Pancreas (tissue), 10 donors: ENCODE measurements at regions of chr1 and their contacts with region 1.

Region 1: DNA sequence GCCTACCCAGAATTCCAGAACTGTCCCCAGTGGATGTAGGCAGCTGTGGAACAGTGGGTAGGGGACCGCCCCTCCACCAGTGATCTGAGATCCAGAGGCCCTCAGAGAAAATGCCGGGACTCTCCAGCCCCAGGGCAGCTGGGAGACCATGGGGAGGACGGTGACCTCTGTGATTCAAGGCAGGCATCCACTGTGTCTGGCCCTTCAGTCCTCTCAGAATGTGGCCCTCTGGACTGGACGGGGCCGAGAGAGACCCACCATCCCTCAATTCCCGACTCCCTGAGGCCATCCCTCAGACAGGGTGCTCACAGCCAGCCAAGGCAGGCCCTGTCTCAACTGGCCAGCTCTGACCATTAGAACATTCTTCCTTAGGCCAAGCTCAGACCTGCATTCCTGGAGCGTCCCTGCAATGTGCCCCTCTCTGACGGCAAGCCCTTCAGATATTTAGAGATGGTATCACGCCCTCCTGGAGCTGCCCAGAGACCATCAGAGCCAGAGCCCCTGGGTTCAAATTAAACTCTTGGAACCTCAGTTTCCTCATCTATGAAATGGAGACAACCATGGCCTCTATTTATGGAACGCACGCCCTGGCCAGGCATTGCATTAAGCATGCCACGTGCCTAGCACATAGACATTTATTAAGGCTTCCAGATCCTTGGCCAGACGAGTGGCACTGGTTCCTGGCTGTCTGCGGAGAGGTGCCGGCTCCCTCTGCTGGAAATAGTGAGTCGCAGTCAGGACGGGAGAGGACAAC is 9.6 kb upstream of the EPS8L3 start:
- DNase-seq: peak; percentile 76 to 91 (median 82)
- ATAC-seq: peak; percentile 88 to 93 (median 92)
- H3K4me3 ChIP-seq: no peak overlapping the region
- H3K27ac ChIP-seq: no peak overlapping the region
- H3K4me1 ChIP-seq: no peaks in the 10 kb centered on the region
- H3K27me3 ChIP-seq: no peaks in the 10 kb centered on the region
- CTCF ChIP-seq: peak; percentile 68 to 78 (median 73)

Region 2: GRCh38 chr1:109539676-109540075 is 233.6 kb before region 1 on chr1 and contains the start of gene GPR61:
- intact Hi-C with region 1: loop called in 2 of 3 experiments (anchors 5 to 10 kb)
- DNase-seq: no peak
- ATAC-seq: no peak
- H3K4me3 ChIP-seq: no peak within 1 kb of the TSS
- H3K27ac ChIP-seq: no peak within 1 kb of the TSS
- H3K4me1 ChIP-seq: no peaks in the 10 kb centered on the region
- H3K27me3 ChIP-seq: no peaks in the 10 kb centered on the region
- CTCF ChIP-seq: no peak
- total RNA-seq, gene GPR61: 0.09 TPM in 1 of 6 donors, not detected in the others

Region 3: GRCh38 chr1:109548321-109549267 is 224.7 kb before region 1 on chr1 and contains the start of gene GNAI3:
- intact Hi-C with region 1: loop called in 2 of 3 experiments (anchors 5 to 10 kb)
- DNase-seq: peak; percentile 91 to 96 (median 94)
- ATAC-seq: peak; percentile 94 to 97 (median 95)
- H3K4me3 ChIP-seq: peak within 1 kb of the TSS; percentile 43 to 93 (median 80)
- H3K27ac ChIP-seq: peak within 1 kb of the TSS; percentile 66 to 99 (median 88)
- H3K4me1 ChIP-seq: peaks cover 0 to 41% (median 8%) of the 10 kb centered on the region in 3 donors
- H3K27me3 ChIP-seq: no peaks in the 10 kb centered on the region
- CTCF ChIP-seq: no peak
- total RNA-seq, gene GNAI3: 2.5 to 3.9 (median 3.1) TPM

Region 4: DNA sequence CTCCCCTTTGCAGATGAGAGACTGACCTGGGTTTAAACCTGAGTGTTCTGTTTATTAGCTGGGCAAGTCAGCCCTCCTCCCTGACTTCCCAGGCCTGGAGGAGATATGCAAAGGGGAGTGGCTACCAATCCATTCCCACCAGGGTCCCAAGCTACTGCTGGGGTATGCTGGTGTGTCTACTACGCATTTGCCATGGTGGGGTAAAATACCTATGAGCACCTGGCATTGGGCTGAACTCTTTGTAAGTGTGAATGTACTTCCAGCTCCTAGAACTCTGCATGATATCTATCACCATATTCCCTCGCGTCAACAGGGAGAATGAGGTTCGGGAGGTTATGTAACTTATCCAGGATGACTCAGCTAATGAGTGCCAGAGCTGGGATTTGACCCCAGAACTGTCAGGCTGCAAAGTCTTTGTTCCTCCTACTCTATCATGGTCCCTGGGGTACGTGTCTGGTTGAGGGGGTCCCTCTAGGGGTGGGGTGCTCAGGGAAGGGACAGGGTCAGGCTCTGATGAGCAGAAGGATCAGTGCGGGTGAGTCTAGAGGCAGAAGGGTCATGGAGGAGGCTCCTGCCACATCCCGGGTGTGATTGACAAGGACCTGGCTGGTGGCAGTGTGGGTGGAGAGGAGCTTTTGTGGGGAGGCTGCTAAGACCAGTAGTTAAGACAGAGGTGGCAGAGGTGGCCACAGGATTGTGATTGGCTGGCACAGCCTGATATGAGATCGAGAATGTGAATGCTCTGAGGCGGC is 136.9 kb before region 1 on chr1:
- intact Hi-C with region 1: loop called in 2 of 3 experiments (anchors 5 kb)
- DNase-seq: peak in 1 of 6 donors; percentile 6
- ATAC-seq: peak in 2 of 4 donors; percentile 16 to 27
- H3K4me3 ChIP-seq: no peak overlapping the region
- H3K27ac ChIP-seq: no peak overlapping the region
- H3K4me1 ChIP-seq: no peaks in the 10 kb centered on the region
- H3K27me3 ChIP-seq: no peaks in the 10 kb centered on the region
- CTCF ChIP-seq: no peak

Region 5: GRCh38 chr1:109643385-109644230 is 129.7 kb before region 1 on chr1:
- intact Hi-C with region 1: loop called in 2 of 3 experiments (anchors 5 kb)
- DNase-seq: peak; percentile 75 to 98 (median 86)
- ATAC-seq: peak; percentile 92 to 95 (median 94)
- H3K4me3 ChIP-seq: no peak overlapping the region
- H3K27ac ChIP-seq: no peak overlapping the region
- H3K4me1 ChIP-seq: peaks cover 0 to 6% (median 0%) of the 10 kb centered on the region in 3 donors
- H3K27me3 ChIP-seq: no peaks in the 10 kb centered on the region
- CTCF ChIP-seq: peak; percentile 70 to 91 (median 84)

Region 6: GRCh38 chr1:109864047-109864822 is 90.9 kb after region 1 on chr1:
- intact Hi-C with region 1: no loop called
- DNase-seq: no peak
- ATAC-seq: peak in 2 of 4 donors; percentile 39 to 52
- H3K4me3 ChIP-seq: no peak overlapping the region
- H3K27ac ChIP-seq: no peak overlapping the region
- H3K4me1 ChIP-seq: no peaks in the 10 kb centered on the region
- H3K27me3 ChIP-seq: no peaks in the 10 kb centered on the region
- CTCF ChIP-seq: no peak

Region 7: GRCh38 chr1:109979489-109980091 is 206.3 kb after region 1 on chr1:
- intact Hi-C with region 1: loop called (anchors 2 to 5 kb)
- DNase-seq: no peak
- ATAC-seq: no peak
- H3K4me3 ChIP-seq: no peak overlapping the region
- H3K27ac ChIP-seq: no peak overlapping the region
- H3K4me1 ChIP-seq: no peaks in the 10 kb centered on the region
- H3K27me3 ChIP-seq: no peaks in the 10 kb centered on the region
- CTCF ChIP-seq: no peak

Region 8: GRCh38 chr1:109984456-109985275 is 211.3 kb after region 1 on chr1 and contains the start of gene AHCYL1:
- intact Hi-C with region 1: loop called (anchors 2 to 5 kb)
- DNase-seq: peak; percentile 97 to 100 (median 99)
- ATAC-seq: peak; percentile 95 to 97 (median 97)
- H3K4me3 ChIP-seq: peak within 1 kb of the TSS; percentile 65 to 93 (median 89)
- H3K27ac ChIP-seq: peak within 1 kb of the TSS; percentile 91 to 98 (median 95)
- H3K4me1 ChIP-seq: peaks cover 11 to 42% (median 28%) of the 10 kb centered on the region in 3 donors
- H3K27me3 ChIP-seq: no peaks in the 10 kb centered on the region
- CTCF ChIP-seq: peak; percentile 96 to 99 (median 98)
- total RNA-seq, gene AHCYL1: 44.5 to 85.5 (median 50.1) TPM